ENCODE measurements at regions of chr3 and their contacts with region 1.

Region 1: GRCh38 chr3:47282424-47283192 is at the starts of genes KIF9 and KLHL18:
- DNase-seq: peak; percentile 91
- ATAC-seq: peak; percentile 88
- H3K4me3 Mint-ChIP-seq: peak within 1 kb of the TSS; percentile 99
- H3K27ac Mint-ChIP-seq: peak within 1 kb of the TSS; percentile 100
- H3K4me1 Mint-ChIP-seq: peaks cover 27% of the 10 kb centered on the region
- H3K27me3 Mint-ChIP-seq: no peaks in the 10 kb centered on the region
- total RNA-seq, gene KIF9: 4.5 TPM
- total RNA-seq, gene KLHL18: 23.1 to 23.5 TPM

Region 2: DNA sequence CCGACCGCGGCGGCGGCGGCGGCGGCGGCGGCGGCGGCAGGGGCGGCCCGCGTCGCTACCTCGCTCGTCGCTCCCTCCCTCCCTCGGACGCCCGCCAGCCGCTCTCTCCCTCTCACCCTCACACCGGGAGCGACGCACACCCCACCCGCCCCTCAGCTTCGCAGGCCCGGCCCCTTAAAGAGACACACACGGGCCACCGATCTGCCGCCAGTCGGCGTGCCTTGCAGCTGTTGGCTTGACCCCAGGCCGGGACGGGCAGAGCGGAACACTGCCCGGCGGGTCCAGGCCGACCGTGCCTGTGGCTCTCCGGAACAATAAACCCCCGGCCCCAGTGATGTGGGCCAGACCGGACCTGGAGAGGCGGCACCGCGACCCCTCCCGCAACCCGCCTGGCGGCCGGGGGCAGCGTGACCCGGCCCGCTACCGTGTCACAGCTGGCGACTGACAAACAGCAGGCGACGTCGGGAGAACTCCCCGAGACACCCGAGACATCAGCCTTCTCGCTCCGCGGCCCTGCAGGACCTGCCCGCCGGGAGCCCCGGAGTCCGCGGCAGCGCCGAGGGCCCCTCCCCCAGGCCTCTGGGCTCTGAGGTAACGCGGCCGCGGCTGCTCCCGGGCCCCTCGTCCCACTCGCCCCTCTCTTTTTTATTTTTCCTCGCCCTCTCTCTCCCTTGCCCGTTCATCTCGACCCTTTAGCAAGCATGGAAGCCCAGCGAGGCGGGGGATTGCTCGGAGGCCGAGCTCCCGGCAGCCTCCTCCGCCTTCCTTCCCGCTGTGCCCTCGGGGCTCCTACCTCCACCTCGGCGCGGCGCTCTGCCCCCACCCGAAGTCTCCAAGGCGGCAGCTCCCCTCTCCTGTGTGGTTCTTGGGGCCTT is 118.4 kb before region 1 on chr3 and contains the start of gene SETD2:
- POLR2A ChIA-PET with region 1: interaction called, 12 read pairs
- DNase-seq: peak; percentile 86
- ATAC-seq: peak; percentile 88
- H3K4me3 Mint-ChIP-seq: peak within 1 kb of the TSS; percentile 99
- H3K27ac Mint-ChIP-seq: peak within 1 kb of the TSS; percentile 100
- H3K4me1 Mint-ChIP-seq: peaks cover 38% of the 10 kb centered on the region
- H3K27me3 Mint-ChIP-seq: no peaks in the 10 kb centered on the region
- total RNA-seq, gene SETD2: 54.1 to 63.3 TPM